OCI-LY7 (cell line): ENCODE measurements at regions of chr1 and their contacts with region 1.

Region 1: DNA sequence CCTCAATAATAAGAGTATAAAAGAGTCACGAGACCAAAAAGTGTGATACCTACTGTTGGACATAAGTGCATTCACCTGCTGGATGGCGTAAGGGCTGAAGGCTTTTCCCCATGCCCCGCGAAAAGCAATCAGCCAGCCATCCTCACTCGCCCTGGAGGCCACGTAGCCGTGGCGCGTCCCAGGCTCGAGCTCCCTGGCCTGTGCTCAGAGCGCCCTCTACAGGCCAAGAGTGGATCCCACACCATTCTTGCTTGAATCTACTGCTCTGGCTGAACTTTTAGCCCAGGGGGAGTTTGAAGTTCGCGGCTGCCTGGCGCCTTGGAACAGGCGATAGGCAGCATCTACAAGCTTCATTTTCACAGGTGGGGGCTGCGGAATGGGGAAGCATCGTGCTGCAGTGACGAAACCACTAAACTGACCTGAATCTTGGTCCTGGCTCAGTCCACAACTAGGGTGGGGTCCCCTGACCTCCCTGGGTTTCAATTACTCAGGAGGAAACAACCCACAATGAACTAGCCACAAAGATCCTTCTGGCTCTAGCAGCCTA is 70.3 kb upstream of the SERBP1 start:
- DNase-seq: peak; percentile 89
- H3K4me3 ChIP-seq: no peak overlapping the region
- H3K27ac ChIP-seq: no peak overlapping the region
- H3K4me1 ChIP-seq: no peaks in the 10 kb centered on the region
- CTCF ChIP-seq: peak; percentile 97

Region 2: DNA sequence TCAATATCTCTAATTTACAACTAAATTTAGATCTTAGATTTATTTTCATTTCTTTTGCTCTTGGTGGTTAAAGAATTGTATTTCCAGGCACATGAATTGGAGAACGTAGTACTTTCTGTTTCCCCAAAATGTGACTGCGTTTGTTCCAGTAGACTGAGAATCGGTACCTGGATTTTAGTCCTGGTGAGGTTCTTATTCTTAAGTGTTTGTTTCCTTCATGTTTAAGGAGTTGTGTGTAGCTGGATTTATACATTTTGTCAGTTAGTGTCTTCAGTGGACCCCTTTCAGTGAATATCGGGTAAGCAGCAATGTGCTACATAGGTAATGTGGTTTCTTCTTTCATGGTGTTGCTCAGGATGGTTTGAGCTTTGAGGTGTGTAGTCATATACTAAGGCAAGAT is 568.9 kb before region 1 on chr1:
- CTCF ChIA-PET with region 1: no interaction called
- POLR2A ChIA-PET with region 1: no interaction called
- intact Hi-C with region 1: no loop called
- DNase-seq: peak; percentile 36
- H3K4me3 ChIP-seq: peak overlapping the region; percentile 98
- H3K27ac ChIP-seq: peak overlapping the region; percentile 86
- H3K4me1 ChIP-seq: peaks cover 60% of the 10 kb centered on the region
- CTCF ChIP-seq: no peak

Region 3: GRCh38 chr1:67214420-67215174 is 285.9 kb before region 1 on chr1:
- CTCF ChIA-PET with region 1: no interaction called
- POLR2A ChIA-PET with region 1: no interaction called
- intact Hi-C with region 1: loop called (anchors 5 kb)
- DNase-seq: peak; percentile 54
- H3K4me3 ChIP-seq: no peak overlapping the region
- H3K27ac ChIP-seq: no peak overlapping the region
- H3K4me1 ChIP-seq: peaks cover 7% of the 10 kb centered on the region
- CTCF ChIP-seq: peak; percentile 85

Region 4: GRCh38 chr1:67230539-67230938 is 269.9 kb before region 1 on chr1:
- CTCF ChIA-PET with region 1: no interaction called
- POLR2A ChIA-PET with region 1: no interaction called
- intact Hi-C with region 1: loop called (anchors 1 kb)
- DNase-seq: no peak
- H3K4me3 ChIP-seq: no peak overlapping the region
- H3K27ac ChIP-seq: no peak overlapping the region
- H3K4me1 ChIP-seq: no peaks in the 10 kb centered on the region
- CTCF ChIP-seq: no peak

Region 5: GRCh38 chr1:67347688-67348472 is 152.6 kb before region 1 on chr1:
- CTCF ChIA-PET with region 1: interaction called, 3 read pairs
- POLR2A ChIA-PET with region 1: interaction called, 3 read pairs
- intact Hi-C with region 1: loop called (anchors 1 kb)
- DNase-seq: peak; percentile 55
- H3K4me3 ChIP-seq: no peak overlapping the region
- H3K27ac ChIP-seq: no peak overlapping the region
- H3K4me1 ChIP-seq: no peaks in the 10 kb centered on the region
- CTCF ChIP-seq: peak; percentile 91

Region 6: DNA sequence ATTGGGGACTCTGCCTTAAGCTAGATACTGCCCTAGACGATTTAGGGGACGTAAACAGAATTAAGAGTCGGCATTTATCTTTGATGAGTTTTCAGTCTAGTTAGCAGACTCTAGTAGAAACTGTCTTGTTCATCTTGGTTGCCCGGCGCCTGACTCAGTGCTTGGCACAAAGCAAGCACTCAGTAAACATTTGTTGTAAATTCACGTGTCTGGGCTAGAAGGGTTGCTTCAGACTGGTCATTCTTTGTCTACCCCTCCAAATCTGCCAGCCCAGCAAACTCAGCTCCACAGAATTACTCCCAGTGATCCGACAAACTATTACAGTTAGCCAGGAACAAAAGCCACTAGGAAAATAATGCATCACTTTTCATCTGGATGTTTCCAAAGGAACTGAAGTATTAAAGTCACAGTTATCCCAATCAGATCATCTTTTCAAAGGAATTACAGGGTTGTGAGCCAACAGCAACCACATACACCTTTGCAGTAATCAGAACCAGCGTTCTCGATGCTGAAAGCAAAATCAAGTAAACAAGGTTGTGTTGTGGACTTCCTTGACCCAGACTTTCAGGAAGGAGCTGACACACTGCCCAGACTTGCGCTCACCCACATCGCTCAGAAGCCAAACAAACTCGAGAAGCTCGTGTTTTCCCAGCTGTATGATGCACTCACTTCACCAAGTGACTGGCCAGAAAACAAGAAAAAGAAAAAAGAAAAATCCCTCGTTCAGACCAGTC is 118.0 kb after region 1 on chr1:
- CTCF ChIA-PET with region 1: no interaction called
- POLR2A ChIA-PET with region 1: no interaction called
- intact Hi-C with region 1: no loop called
- DNase-seq: no peak
- H3K4me3 ChIP-seq: no peak overlapping the region
- H3K27ac ChIP-seq: no peak overlapping the region
- H3K4me1 ChIP-seq: no peaks in the 10 kb centered on the region
- CTCF ChIP-seq: no peak

Region 7: GRCh38 chr1:67664048-67664447 is 163.6 kb after region 1 on chr1:
- CTCF ChIA-PET with region 1: no interaction called
- POLR2A ChIA-PET with region 1: no interaction called
- intact Hi-C with region 1: no loop called
- DNase-seq: no peak
- H3K4me3 ChIP-seq: no peak overlapping the region
- H3K27ac ChIP-seq: no peak overlapping the region
- H3K4me1 ChIP-seq: no peaks in the 10 kb centered on the region
- CTCF ChIP-seq: no peak